ENCODE measurements at regions of chr17 and their contacts with region 1.

Region 1: GRCh38 chr17:48610282-48611211 is at the start of gene HOXB7:
- DNase-seq: no peak
- H3K4me3 ChIP-seq: peak within 1 kb of the TSS; percentile 67
- CTCF ChIP-seq: no peak

Region 2: DNA sequence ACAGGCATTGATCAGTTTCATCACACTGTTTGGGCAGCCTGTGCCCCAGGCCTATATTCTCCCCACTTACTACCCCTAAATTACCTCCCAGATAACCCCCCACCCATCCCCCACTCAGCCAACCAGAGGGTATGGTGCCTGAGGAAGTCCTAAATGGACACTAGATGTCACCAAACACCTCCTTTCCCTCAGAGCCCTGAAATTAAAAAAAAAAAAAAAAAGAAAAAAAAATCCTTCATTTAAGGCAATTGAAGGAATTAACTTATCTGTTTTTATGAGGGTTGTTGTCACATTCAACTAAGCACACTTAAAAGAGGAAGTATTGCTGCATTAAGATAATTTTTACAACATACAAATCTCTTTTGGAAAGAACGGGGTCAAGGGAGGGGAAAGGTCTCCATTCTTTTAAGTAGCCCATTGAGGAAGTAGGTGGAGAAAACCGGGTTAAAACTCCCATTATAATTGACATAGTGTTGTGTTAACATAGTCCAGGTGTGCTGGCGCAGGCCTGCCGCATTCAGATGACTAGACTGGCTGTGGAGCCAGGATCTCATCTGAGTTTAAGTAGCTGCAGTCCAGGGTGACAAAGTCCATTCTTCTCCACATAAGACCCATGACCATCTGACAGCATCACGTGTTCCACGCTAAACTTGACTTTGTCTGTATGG is 456.7 kb before region 1 on chr17:
- CTCF ChIA-PET with region 1: interaction called, 21 read pairs
- POLR2A ChIA-PET with region 1: no interaction called
- DNase-seq: no peak
- H3K4me3 ChIP-seq: no peak overlapping the region
- CTCF ChIP-seq: peak; percentile 44

Region 3: DNA sequence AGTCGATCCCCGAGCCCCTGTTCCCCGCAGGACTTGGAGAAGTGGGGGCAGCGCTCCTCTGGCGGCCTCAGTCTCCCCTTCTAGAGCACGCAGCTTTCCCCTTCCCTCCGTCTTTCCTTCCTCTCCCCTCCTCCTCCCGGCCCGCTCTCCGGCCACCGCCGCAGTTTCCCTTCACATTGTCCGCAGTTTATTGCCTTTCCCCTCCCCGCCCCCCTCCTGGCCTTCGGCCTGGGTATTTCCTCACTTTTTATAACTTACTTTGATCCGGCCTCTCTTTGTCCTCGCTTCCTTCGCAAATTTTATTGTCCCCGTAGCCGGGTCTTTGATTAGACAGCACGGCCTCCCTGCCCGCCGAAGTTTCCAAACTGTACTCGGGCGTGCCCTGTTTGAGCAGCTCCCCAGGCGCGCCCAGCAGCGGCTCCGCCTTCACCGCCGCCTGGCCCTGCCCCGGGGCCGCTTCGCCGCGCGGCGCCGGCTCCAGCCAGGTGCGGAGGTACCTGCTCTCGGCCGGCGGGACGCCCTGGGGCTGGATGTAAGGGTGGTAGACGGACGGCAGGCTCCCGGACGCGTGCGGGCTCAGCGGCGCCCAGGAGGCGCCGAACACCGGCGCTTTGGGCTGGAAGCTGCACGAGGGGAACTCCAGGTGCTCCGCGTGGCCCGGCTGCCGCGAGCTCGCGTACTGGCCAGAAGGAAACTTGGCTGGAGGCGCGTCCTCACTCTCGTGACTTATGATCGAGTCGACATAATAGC is 15.1 kb after region 1 on chr17:
- CTCF ChIA-PET with region 1: interaction called, 10 read pairs
- POLR2A ChIA-PET with region 1: interaction called, 3 read pairs
- DNase-seq: no peak
- H3K4me3 ChIP-seq: peak overlapping the region; percentile 51
- CTCF ChIP-seq: no peak

Measured in AG04449 (cell line).